ENCODE measurements at regions of chr17 and their contacts with region 1.

Region 1: GRCh38 chr17:46159686-46160085 is 33.5 kb downstream of the KANSL1 start:
- DNase-seq: no peak
- H3K4me3 Mint-ChIP-seq: no peak overlapping the region
- H3K27ac Mint-ChIP-seq: no peak overlapping the region
- H3K4me1 Mint-ChIP-seq: peaks cover 88% of the 10 kb centered on the region
- H3K27me3 Mint-ChIP-seq: no peaks in the 10 kb centered on the region

Region 2: DNA sequence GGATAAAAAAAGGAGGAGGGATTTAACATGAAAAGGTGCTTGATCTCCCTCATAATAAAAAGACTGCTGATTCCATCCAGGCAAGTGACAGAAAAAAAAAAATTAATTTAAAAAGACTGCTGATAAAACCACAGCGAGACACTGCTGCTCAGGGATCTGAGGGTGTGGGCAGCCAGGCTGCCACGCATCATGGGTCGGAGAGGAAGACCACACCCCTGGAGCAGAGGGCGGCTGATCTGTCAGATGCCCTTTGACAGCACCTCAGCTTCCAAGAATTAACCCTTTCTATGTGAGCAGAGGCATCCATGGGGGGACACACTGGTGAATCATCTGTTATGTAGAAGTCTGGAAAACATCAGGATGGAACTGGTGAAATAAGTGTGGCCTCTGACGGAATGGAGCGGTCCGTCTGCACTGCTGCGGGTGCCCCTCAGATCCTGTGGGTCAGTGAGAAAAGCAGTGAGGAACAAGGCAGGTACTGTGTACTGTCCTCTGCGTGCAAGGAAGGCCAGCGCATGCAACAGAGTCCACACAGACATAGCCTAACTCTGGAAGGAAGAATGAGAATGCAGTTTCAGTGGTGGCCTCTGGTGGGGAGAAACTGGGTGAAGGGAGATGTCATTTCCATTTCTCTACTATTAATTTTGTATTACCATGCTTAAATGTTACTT is 245.5 kb before region 1 on chr17:
- CTCF ChIA-PET with region 1: no interaction called
- POLR2A ChIA-PET with region 1: no interaction called
- intact Hi-C with region 1: no loop called
- DNase-seq: no peak
- H3K4me3 Mint-ChIP-seq: no peak overlapping the region
- H3K27ac Mint-ChIP-seq: no peak overlapping the region
- H3K4me1 Mint-ChIP-seq: peaks cover 4% of the 10 kb centered on the region
- H3K27me3 Mint-ChIP-seq: peaks cover 8% of the 10 kb centered on the region

Region 3: GRCh38 chr17:46115699-46116098 is 44.0 kb before region 1 on chr17:
- CTCF ChIA-PET with region 1: no interaction called
- POLR2A ChIA-PET with region 1: no interaction called
- intact Hi-C with region 1: loop called (anchors 5 kb)
- DNase-seq: no peak
- H3K4me3 Mint-ChIP-seq: no peak overlapping the region
- H3K27ac Mint-ChIP-seq: no peak overlapping the region
- H3K4me1 Mint-ChIP-seq: peaks cover 70% of the 10 kb centered on the region
- H3K27me3 Mint-ChIP-seq: no peaks in the 10 kb centered on the region

Region 4: DNA sequence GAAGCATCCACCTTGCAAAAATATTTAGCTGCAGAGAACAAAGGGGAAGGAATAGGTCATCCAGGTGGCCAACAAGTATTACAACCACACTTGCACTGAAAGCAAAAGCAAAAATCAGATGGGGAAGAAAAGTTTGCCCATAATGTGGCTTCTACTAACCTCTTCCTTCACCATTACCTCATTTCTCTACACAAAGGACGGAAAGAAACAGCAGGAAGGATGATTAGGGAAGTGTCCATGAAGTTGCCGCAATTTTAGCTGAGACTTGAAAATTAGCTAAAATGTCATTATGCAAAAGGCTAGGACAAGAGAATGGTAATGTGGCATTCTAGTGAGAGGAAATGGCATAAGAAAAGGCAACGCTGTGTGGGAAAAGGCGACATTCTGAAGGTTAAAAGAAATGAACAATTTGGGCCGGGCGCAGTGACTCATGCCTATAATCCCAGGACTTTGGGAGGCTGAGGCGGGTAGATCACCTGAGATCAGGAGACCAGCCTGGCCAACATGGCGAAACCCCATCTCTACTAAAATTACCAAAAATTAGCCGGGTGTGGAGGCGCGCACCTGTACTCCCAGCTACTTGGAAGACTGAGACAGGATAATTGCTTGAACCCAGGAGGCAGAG is 19.8 kb after region 1 on chr17:
- CTCF ChIA-PET with region 1: interaction called, 14 read pairs
- POLR2A ChIA-PET with region 1: interaction called, 3 read pairs
- intact Hi-C with region 1: loop called (anchors 1 kb)
- DNase-seq: no peak
- H3K4me3 Mint-ChIP-seq: peak overlapping the region; percentile 17
- H3K27ac Mint-ChIP-seq: peak overlapping the region; percentile 30
- H3K4me1 Mint-ChIP-seq: peaks cover 78% of the 10 kb centered on the region
- H3K27me3 Mint-ChIP-seq: no peaks in the 10 kb centered on the region